GM12878 (cell line): ENCODE measurements at regions of chr7 and their contacts with region 1.

Region 1: GRCh38 chr7:22333680-22334141 is 23.2 kb downstream of the RAPGEF5 start:
- DNase-seq: no peak
- ATAC-seq: no peak
- H3K4me3 ChIP-seq: no peak overlapping the region
- H3K27ac ChIP-seq: no peak overlapping the region
- H3K4me1 ChIP-seq: peaks cover 4% of the 10 kb centered on the region; the same call in 1 of the 2 replicates
- H3K27me3 ChIP-seq: no peaks in the 10 kb centered on the region
- CTCF ChIP-seq: no peak
- EP300 ChIP-seq: no peak
- POLR2A ChIP-seq: no peak
- RAD21 ChIP-seq: no peak

Region 2: DNA sequence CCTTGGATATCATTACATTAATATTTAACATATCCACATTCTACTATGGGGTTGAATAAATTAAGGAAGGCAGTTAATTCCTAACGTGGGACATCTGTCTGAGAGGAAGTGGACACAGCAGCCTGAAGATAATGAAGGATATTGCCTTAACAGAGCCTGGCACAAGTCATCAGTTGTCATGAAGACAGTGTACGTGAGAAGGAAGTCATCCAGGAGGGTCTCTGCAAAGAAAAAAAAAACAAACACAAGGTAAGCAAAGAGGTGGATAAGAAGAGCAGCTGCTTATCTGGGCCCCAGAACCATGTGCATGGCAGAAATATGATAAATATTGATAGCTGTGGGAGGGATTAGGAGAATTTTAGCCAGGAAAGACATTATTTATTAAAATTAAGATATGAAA is 166.8 kb before region 1 on chr7:
- CTCF ChIA-PET with region 1: no interaction called
- POLR2A ChIA-PET with region 1: no interaction called
- RAD21 ChIA-PET with region 1: no interaction called
- SMC1A ChIA-PET with region 1: no interaction called
- in situ Hi-C with region 1: no loop called
- intact Hi-C with region 1: no loop called
- DNase-seq: no peak
- ATAC-seq: no peak
- H3K4me3 ChIP-seq: no peak overlapping the region
- H3K27ac ChIP-seq: no peak overlapping the region
- H3K4me1 ChIP-seq: no peaks in the 10 kb centered on the region
- H3K27me3 ChIP-seq: no peaks in the 10 kb centered on the region
- CTCF ChIP-seq: no peak
- EP300 ChIP-seq: no peak
- POLR2A ChIP-seq: no peak
- RAD21 ChIP-seq: no peak

Region 3: DNA sequence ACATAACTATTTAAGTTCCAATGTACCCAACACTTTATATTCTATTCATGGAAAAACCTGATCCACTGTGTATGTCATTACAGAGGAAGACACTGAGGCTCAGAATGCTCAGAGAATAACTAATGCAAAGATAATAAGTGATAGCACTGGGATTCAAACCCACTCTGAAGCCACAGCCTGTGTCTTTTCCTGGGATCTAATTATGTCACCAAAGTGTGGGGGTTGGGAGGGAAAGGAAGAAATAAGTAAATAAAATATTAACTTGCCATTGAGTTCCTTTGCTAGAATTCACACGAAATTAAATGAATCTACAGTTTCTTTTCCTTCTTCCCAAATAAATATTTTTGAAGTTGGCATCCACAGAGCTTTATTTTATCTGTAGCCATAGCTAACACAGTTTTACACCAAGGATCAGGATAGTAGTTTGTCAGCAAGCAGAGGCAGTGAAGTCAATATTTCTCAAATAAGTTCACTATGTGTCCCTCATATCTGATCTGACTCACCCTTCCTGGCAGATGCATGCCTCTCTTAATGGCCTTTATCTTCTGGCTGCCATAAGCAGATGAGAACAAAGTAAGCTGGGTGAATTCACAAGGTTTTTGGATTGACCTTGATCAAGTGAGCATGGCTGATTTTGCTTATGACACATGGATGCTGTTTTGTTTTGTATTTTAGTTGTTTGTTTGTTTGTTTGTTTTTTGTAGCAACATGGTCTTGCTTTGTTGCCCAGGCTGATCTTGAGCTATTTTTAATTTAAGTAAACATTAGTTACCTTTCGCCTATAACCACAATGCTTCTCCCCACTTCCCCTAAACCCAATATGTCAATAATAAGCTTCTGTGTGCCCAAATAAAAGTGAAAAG is 17.0 kb after region 1 on chr7:
- CTCF ChIA-PET with region 1: interaction called, 5 read pairs
- POLR2A ChIA-PET with region 1: no interaction called
- RAD21 ChIA-PET with region 1: interaction called, 3 read pairs
- SMC1A ChIA-PET with region 1: interaction called, 29 read pairs
- in situ Hi-C with region 1: no loop called
- intact Hi-C with region 1: no loop called
- DNase-seq: peak; percentile 46
- ATAC-seq: peak; percentile 72
- H3K4me3 ChIP-seq: peak overlapping the region; percentile 36; the same call in 1 of the 2 replicates
- H3K27ac ChIP-seq: peak overlapping the region; percentile 79
- H3K4me1 ChIP-seq: peaks cover 27% of the 10 kb centered on the region; the same call in 1 of the 2 replicates
- H3K27me3 ChIP-seq: no peaks in the 10 kb centered on the region; a peak in 1 of 4 replicates
- CTCF ChIP-seq: no peak
- EP300 ChIP-seq: no peak
- POLR2A ChIP-seq: no peak
- RAD21 ChIP-seq: no peak